WTC11 (cell line): ENCODE measurements at regions of chr4 and their contacts with region 1.

Region 1: DNA sequence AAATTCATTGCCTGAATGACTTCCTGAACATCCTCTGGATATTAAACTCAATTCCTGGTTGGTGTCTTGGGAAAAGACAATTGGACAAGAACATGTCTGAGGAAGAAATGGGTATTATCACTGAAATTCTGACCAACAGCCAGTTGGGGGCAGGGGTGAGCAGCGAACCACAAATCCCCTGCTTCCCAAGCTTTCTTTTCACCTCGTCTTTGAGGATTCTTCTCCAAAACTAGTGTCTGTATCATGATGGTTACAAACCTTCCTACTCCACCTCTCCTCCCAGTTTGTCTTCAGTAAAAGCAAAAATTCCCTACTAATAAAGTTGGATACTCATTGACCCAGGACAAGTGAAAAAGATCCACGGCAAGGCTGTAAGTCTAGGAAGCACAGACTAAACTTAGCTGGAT is 48.3 kb upstream of the WDR1 start:
- DNase-seq: peak; percentile 61
- ATAC-seq: peak; percentile 68
- H3K4me3 Mint-ChIP-seq: no peak overlapping the region
- H3K27ac Mint-ChIP-seq: no peak overlapping the region
- H3K4me1 Mint-ChIP-seq: no peaks in the 10 kb centered on the region
- H3K27me3 Mint-ChIP-seq: no peaks in the 10 kb centered on the region; the same call in 1 of the 2 replicates
- CTCF ChIP-seq: peak; percentile 33

Region 2: GRCh38 chr4:10180927-10181782 is 16.3 kb after region 1 on chr4:
- CTCF ChIA-PET with region 1: no interaction called
- POLR2A ChIA-PET with region 1: no interaction called
- DNase-seq: no peak
- ATAC-seq: no peak
- H3K4me3 Mint-ChIP-seq: no peak overlapping the region
- H3K27ac Mint-ChIP-seq: no peak overlapping the region
- H3K4me1 Mint-ChIP-seq: no peaks in the 10 kb centered on the region
- H3K27me3 Mint-ChIP-seq: peaks cover 3% of the 10 kb centered on the region; the same call in 1 of the 2 replicates
- CTCF ChIP-seq: no peak

Region 3: GRCh38 chr4:10403633-10404445 is 239.0 kb after region 1 on chr4:
- CTCF ChIA-PET with region 1: interaction called, 32 read pairs
- POLR2A ChIA-PET with region 1: no interaction called
- DNase-seq: no peak
- ATAC-seq: peak; percentile 80
- H3K4me3 Mint-ChIP-seq: no peak overlapping the region
- H3K27ac Mint-ChIP-seq: 0 out of 2 replicates have a peak overlapping the region, but pooled peaks have one; percentile 51
- H3K4me1 Mint-ChIP-seq: peaks cover 9% of the 10 kb centered on the region
- H3K27me3 Mint-ChIP-seq: no peaks in the 10 kb centered on the region
- CTCF ChIP-seq: no peak

Region 4: GRCh38 chr4:10526429-10527222 is 361.7 kb after region 1 on chr4:
- CTCF ChIA-PET with region 1: interaction called, 15 read pairs
- POLR2A ChIA-PET with region 1: no interaction called
- DNase-seq: peak; percentile 27
- ATAC-seq: peak; percentile 92
- H3K4me3 Mint-ChIP-seq: no peak overlapping the region
- H3K27ac Mint-ChIP-seq: no peak overlapping the region
- H3K4me1 Mint-ChIP-seq: peaks cover 11% of the 10 kb centered on the region
- H3K27me3 Mint-ChIP-seq: no peaks in the 10 kb centered on the region; the same call in 1 of the 2 replicates
- CTCF ChIP-seq: no peak

Region 5: DNA sequence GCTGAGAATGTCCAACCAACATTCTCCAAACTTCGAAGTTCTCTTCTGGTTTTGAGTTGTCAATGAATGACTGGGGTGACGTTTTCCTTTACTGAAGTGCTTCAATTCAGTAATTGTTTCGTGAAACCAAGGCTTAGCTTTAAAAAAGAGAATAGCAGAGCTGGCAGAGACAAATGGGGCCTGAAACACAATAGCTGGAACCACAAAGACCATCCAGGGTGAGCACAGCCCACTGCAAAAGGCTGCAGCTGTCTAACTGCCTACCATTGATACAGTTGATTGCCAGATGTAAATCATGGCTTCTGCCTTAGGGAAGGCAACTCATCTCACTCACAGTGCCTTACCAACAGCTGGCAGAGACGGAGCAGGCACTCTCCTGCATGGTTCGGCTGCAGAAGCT is 371.0 kb after region 1 on chr4:
- CTCF ChIA-PET with region 1: interaction called, 15 read pairs
- POLR2A ChIA-PET with region 1: no interaction called
- DNase-seq: no peak
- ATAC-seq: no peak
- H3K4me3 Mint-ChIP-seq: no peak overlapping the region
- H3K27ac Mint-ChIP-seq: no peak overlapping the region
- H3K4me1 Mint-ChIP-seq: peaks cover 12% of the 10 kb centered on the region
- H3K27me3 Mint-ChIP-seq: no peaks in the 10 kb centered on the region
- CTCF ChIP-seq: no peak

Region 6: GRCh38 chr4:10554694-10555093 is 389.8 kb after region 1 on chr4:
- CTCF ChIA-PET with region 1: interaction called, 13 read pairs
- POLR2A ChIA-PET with region 1: no interaction called
- DNase-seq: peak; percentile 56
- ATAC-seq: peak; percentile 80
- H3K4me3 Mint-ChIP-seq: no peak overlapping the region
- H3K27ac Mint-ChIP-seq: no peak overlapping the region
- H3K4me1 Mint-ChIP-seq: peaks cover 5% of the 10 kb centered on the region
- H3K27me3 Mint-ChIP-seq: no peaks in the 10 kb centered on the region; the same call in 1 of the 2 replicates
- CTCF ChIP-seq: 0 out of 2 replicates have a peak, but pooled peaks have one; percentile 35